Activated T-helper 2 cell treated with anti-CD3 and anti-CD28 coated beads, Interferon-gamma antibody, Interleukin-2, Interleukin-4, amounts not matched to agents 10 μg/mL and 5 μg/mL and 100 μg/mL, durations not matched to agents 14 hours and 24 hours and 36 hours (primary cell): ENCODE measurements at regions of chr16 and their contacts with region 1.

Region 1: GRCh38 chr16:57810197-57811031 is 8.1 kb upstream of the KIFC3 start:
- DNase-seq: peak; percentile 78
- H3K4me3 Mint-ChIP-seq: peak overlapping the region; percentile 39
- H3K27ac Mint-ChIP-seq: peak overlapping the region; percentile 70
- H3K4me1 Mint-ChIP-seq: peaks cover 17% of the 10 kb centered on the region
- H3K27me3 Mint-ChIP-seq: peaks cover 17% of the 10 kb centered on the region

Region 2: DNA sequence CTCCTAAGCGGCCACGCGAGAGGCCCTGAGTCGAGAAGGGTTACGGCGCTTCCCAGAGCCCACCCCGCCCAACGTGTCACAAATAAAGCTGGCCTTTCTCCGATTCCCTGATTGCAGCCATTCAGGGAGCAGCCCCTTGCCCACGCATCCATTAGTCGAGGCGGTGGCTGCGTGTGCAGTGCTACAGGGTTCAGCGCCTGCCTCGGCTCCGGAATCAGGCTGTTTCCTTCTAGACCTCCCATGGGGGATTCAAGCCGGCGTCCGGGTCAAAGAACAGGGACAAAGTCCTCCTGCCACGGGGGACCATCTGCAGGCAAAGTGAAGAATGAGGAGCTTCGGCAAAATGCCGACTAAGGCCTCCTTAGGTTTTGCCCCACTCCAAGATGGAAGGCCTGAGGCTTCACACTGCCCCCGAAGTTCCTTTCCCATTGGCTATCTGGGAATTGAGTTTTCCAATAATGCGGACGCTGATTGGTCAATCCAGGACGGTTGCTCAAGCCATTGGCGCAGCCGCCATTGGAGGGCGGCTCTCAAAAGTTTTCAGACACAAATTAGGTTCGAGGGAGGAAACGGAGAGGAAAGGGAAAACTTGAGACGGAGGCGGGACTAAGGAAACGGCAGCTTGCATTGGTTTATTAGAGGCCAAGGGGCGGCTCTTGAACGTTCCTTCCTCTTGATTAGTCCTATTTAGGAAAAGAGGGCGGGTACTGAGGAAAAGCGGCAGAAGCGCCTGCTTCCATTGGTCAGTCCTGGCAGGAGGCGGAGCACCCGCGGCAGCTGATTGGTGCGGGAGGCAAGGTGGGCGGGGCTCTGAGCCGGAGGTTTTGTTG is 75.3 kb before region 1 on chr16:
- intact Hi-C with region 1: loop called (anchors 5 kb)
- DNase-seq: peak; percentile 98
- H3K4me3 Mint-ChIP-seq: peak overlapping the region; percentile 97
- H3K27ac Mint-ChIP-seq: peak overlapping the region; percentile 96
- H3K4me1 Mint-ChIP-seq: peaks cover 15% of the 10 kb centered on the region
- H3K27me3 Mint-ChIP-seq: no peaks in the 10 kb centered on the region